Naive thymus-derived CD4-positive, alpha-beta T cell (primary cell): ENCODE measurements at regions of chr1 and their contacts with region 1.

Region 1: DNA sequence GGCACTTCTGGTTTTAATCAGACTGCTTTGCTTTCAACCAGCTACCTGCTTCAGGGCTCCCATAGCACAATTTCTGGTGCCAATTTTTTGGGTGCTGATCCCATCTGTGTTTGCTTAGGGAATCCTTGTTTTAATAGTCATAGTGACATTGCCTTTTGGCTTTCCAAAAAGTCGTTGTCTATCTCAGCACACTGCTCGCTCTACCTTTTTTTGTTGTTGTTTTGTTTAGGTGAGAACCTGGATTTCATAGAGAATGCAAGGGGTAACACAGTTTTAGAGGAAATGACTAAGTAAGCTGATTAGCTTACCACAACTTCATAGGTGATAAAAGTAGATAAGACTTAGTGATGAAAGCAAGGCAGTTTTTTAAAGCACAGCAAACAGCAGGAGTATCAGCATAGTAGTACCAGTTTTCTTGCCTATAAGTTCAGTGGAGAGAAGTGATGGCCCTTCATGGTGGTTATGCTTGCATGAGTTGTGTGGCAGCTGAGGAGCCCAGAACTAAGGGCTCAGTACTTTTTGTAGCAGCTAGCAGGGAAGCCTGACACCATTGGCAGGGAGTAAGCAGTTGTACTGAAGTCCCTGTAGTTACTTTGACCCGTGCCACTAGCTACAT is 31.3 kb downstream of the NEK7 start:
- DNase-seq: peak in 6 of 9 donors; percentile 25 to 45 (median 32)
- ATAC-seq: peak; percentile 91
- H3K4me3 ChIP-seq: peak overlapping the region; percentile 2
- H3K4me3 Mint-ChIP-seq: peak overlapping the region; percentile 0 to 75 (median 54)
- H3K27ac ChIP-seq: peak overlapping the region; percentile 43
- H3K27ac Mint-ChIP-seq: peak overlapping the region; percentile 9 to 86 (median 74)
- H3K4me1 ChIP-seq: peaks cover 35 to 70% of the 10 kb centered on the region in 2 donors
- H3K4me1 Mint-ChIP-seq: peaks cover 39 to 91% (median 82%) of the 10 kb centered on the region in 7 donors
- H3K27me3 ChIP-seq: no peaks in the 10 kb centered on the region
- H3K27me3 Mint-ChIP-seq: no peaks in the 10 kb centered on the region

Region 2: GRCh38 chr1:198167436-198167934 is 20.6 kb before region 1 on chr1:
- CTCF ChIA-PET with region 1: no interaction called
- POLR2A ChIA-PET with region 1: interaction called, 11 read pairs
- intact Hi-C with region 1: no loop called
- DNase-seq: peak in 7 of 9 donors; percentile 26 to 66 (median 42)
- ATAC-seq: peak; percentile 77
- H3K4me3 ChIP-seq: peak overlapping the region; percentile 54
- H3K4me3 Mint-ChIP-seq: peak overlapping the region; percentile 60 to 88 (median 78)
- H3K27ac ChIP-seq: peak overlapping the region; percentile 71
- H3K27ac Mint-ChIP-seq: peak overlapping the region; percentile 84 to 98 (median 95)
- H3K4me1 ChIP-seq: peaks cover 84 to 90% of the 10 kb centered on the region in 2 donors
- H3K4me1 Mint-ChIP-seq: peaks cover 55 to 96% (median 93%) of the 10 kb centered on the region in 7 donors
- H3K27me3 ChIP-seq: no peaks in the 10 kb centered on the region
- H3K27me3 Mint-ChIP-seq: no peaks in the 10 kb centered on the region

Region 3: DNA sequence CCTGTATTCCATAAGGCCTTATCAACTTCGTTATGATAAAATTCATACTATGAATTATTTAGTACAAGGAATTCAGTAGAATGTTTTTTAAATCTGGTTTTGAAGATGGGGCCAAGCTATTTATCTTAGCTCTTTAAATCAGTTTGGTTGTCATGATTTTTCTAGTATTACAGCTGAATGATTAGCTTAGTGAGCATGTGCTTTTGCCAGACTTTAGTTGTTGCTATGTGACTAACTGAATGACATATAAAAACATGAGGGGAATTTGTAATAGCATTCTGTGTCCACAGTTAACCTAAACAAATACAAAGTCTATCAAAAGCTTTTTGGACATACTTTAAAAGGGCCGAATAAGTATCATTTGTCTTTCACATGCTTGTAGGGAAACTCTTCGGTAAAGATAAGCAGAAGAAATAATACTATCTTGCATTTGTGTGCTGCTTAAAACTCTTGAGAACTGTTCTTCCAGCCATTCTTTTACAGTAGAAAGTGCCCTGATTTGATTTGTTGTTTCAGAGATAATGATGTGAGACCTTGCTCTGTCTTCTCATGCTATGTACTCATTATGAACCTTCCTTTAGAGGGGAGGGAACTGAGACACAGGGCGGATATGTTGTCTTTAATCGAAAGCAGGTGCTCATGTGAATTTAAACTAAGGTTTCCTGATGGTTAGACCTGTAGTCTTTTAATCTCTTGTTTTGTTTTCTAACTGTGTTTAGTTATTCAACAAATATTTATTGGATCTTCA is 12.5 kb before region 1 on chr1:
- CTCF ChIA-PET with region 1: interaction called, 3 read pairs
- POLR2A ChIA-PET with region 1: interaction called, 4 read pairs
- intact Hi-C with region 1: loop called in 1 of 2 experiments (anchors 1 kb)
- DNase-seq: peak in 7 of 9 donors; percentile 29 to 63 (median 51)
- ATAC-seq: peak; percentile 80
- H3K4me3 ChIP-seq: peak overlapping the region; percentile 8
- H3K4me3 Mint-ChIP-seq: peak overlapping the region; percentile 32 to 85 (median 67)
- H3K27ac ChIP-seq: peak overlapping the region; percentile 59
- H3K27ac Mint-ChIP-seq: peak overlapping the region; percentile 19 to 97 (median 93)
- H3K4me1 ChIP-seq: peaks cover 80 to 83% of the 10 kb centered on the region in 2 donors
- H3K4me1 Mint-ChIP-seq: peaks cover 64 to 91% (median 84%) of the 10 kb centered on the region in 7 donors
- H3K27me3 ChIP-seq: no peaks in the 10 kb centered on the region
- H3K27me3 Mint-ChIP-seq: no peaks in the 10 kb centered on the region

Region 4: GRCh38 chr1:198199105-198199504 is 11.0 kb after region 1 on chr1:
- CTCF ChIA-PET with region 1: no interaction called
- POLR2A ChIA-PET with region 1: no interaction called
- intact Hi-C with region 1: loop called in 1 of 2 experiments (anchors 1 kb)
- DNase-seq: no peak
- ATAC-seq: no peak
- H3K4me3 ChIP-seq: no peak overlapping the region
- H3K4me3 Mint-ChIP-seq: peak overlapping the region in 2 of 10 donors; percentile 21 to 43
- H3K27ac ChIP-seq: no peak overlapping the region
- H3K27ac Mint-ChIP-seq: peak overlapping the region in 1 of 9 donors; percentile 31
- H3K4me1 ChIP-seq: peaks cover 11 to 60% of the 10 kb centered on the region in 2 donors
- H3K4me1 Mint-ChIP-seq: peaks cover 46 to 89% (median 78%) of the 10 kb centered on the region in 7 donors
- H3K27me3 ChIP-seq: no peaks in the 10 kb centered on the region
- H3K27me3 Mint-ChIP-seq: no peaks in the 10 kb centered on the region

Region 5: GRCh38 chr1:198206287-198206686 is 18.2 kb after region 1 on chr1:
- CTCF ChIA-PET with region 1: interaction called, 3 read pairs
- POLR2A ChIA-PET with region 1: no interaction called
- intact Hi-C with region 1: loop called in 1 of 2 experiments (anchors 2 kb)
- DNase-seq: no peak
- ATAC-seq: no peak
- H3K4me3 ChIP-seq: no peak overlapping the region
- H3K4me3 Mint-ChIP-seq: no peak overlapping the region
- H3K27ac ChIP-seq: no peak overlapping the region
- H3K27ac Mint-ChIP-seq: peak overlapping the region in 1 of 9 donors; percentile 48
- H3K4me1 ChIP-seq: peaks cover 0 to 22% of the 10 kb centered on the region in 2 donors
- H3K4me1 Mint-ChIP-seq: peaks cover 28 to 64% (median 56%) of the 10 kb centered on the region in 7 donors
- H3K27me3 ChIP-seq: no peaks in the 10 kb centered on the region
- H3K27me3 Mint-ChIP-seq: no peaks in the 10 kb centered on the region

Region 6: GRCh38 chr1:198220428-198220827 is 32.3 kb after region 1 on chr1:
- CTCF ChIA-PET with region 1: no interaction called
- POLR2A ChIA-PET with region 1: no interaction called
- intact Hi-C with region 1: loop called in 1 of 2 experiments (anchors 5 kb)
- DNase-seq: no peak
- ATAC-seq: no peak
- H3K4me3 ChIP-seq: no peak overlapping the region
- H3K4me3 Mint-ChIP-seq: no peak overlapping the region
- H3K27ac ChIP-seq: no peak overlapping the region
- H3K27ac Mint-ChIP-seq: peak overlapping the region in 3 of 9 donors; percentile 4 to 69 (median 19)
- H3K4me1 ChIP-seq: no peaks in the 10 kb centered on the region
- H3K4me1 Mint-ChIP-seq: peaks cover 8 to 56% (median 39%) of the 10 kb centered on the region in 7 donors
- H3K27me3 ChIP-seq: no peaks in the 10 kb centered on the region
- H3K27me3 Mint-ChIP-seq: no peaks in the 10 kb centered on the region

Region 7: GRCh38 chr1:199046618-199047017 is 858.5 kb after region 1 on chr1:
- CTCF ChIA-PET with region 1: no interaction called
- POLR2A ChIA-PET with region 1: no interaction called
- intact Hi-C with region 1: no loop called
- DNase-seq: no peak
- ATAC-seq: no peak
- H3K4me3 ChIP-seq: no peak overlapping the region
- H3K4me3 Mint-ChIP-seq: no peak overlapping the region
- H3K27ac ChIP-seq: no peak overlapping the region
- H3K27ac Mint-ChIP-seq: peak overlapping the region in 1 of 9 donors; percentile 12
- H3K4me1 ChIP-seq: peaks cover 3 to 6% of the 10 kb centered on the region in 2 donors
- H3K4me1 Mint-ChIP-seq: peaks cover 3 to 38% (median 11%) of the 10 kb centered on the region in 7 donors
- H3K27me3 ChIP-seq: no peaks in the 10 kb centered on the region
- H3K27me3 Mint-ChIP-seq: no peaks in the 10 kb centered on the region